PC-3 (cell line): ENCODE measurements at regions of chr2 and their contacts with region 1.

Region 1: GRCh38 chr2:203650860-203651613 is 55.4 kb upstream of the CD28 start:
- DNase-seq: peak; percentile 80
- ATAC-seq: peak; percentile 76
- H3K4me3 ChIP-seq: no peak overlapping the region
- H3K27ac ChIP-seq: no peak overlapping the region
- H3K4me1 ChIP-seq: peaks cover 32% of the 10 kb centered on the region
- H3K27me3 ChIP-seq: no peaks in the 10 kb centered on the region
- CTCF ChIP-seq: peak; percentile 78

Region 2: DNA sequence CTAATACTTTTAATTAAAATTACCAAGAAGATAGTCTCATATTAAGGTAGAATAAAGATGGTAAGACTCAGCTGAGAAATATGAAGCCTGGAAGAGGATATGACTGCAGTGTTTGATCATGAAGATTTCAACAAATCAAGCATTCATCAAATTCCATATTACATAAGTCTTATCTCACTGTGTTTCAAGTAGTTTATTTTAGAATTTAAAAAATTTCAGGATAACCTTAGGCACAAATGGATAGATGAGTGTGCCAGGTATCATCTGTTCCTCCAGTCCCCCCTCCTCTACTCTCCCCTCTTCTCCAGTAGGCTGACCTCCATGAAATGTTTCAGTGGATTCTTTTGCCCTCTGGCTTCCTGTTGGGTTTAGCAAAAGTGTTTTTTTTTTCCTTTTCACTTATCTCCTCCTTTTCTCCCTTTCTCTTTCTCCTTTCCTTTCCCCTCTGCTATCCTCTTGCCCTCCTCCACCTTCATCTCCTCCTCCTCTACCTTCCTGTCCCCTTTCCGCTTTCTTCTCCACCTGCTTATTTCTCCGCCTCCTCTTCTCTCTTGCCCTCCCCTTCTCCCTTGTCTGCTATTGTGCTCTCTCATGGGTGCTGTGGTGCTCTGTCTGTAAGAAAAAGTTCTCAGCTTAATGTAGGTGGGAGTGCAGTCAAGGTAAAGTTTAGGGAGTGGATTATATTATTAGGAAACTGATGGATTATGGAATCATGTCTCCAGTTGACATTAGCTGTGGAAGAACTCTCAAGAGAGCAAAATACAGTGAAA is 250.0 kb before region 1 on chr2:
- CTCF ChIA-PET with region 1: no interaction called
- POLR2A ChIA-PET with region 1: no interaction called
- intact Hi-C with region 1: no loop called
- DNase-seq: peak; percentile 70
- ATAC-seq: peak; percentile 43
- H3K4me3 ChIP-seq: no peak overlapping the region; the same call in 1 of the 2 replicates
- H3K27ac ChIP-seq: peak overlapping the region; percentile 95
- H3K4me1 ChIP-seq: peaks cover 55% of the 10 kb centered on the region
- H3K27me3 ChIP-seq: no peaks in the 10 kb centered on the region
- CTCF ChIP-seq: no peak

Region 3: GRCh38 chr2:203484266-203485112 is 166.5 kb before region 1 on chr2:
- CTCF ChIA-PET with region 1: no interaction called
- POLR2A ChIA-PET with region 1: no interaction called
- intact Hi-C with region 1: loop called (anchors 1 kb)
- DNase-seq: peak; percentile 72
- ATAC-seq: peak; percentile 98
- H3K4me3 ChIP-seq: no peak overlapping the region
- H3K27ac ChIP-seq: no peak overlapping the region
- H3K4me1 ChIP-seq: no peaks in the 10 kb centered on the region; the same call in 1 of the 2 replicates
- H3K27me3 ChIP-seq: no peaks in the 10 kb centered on the region
- CTCF ChIP-seq: peak; percentile 90

Region 4: GRCh38 chr2:203492965-203493364 is 158.1 kb before region 1 on chr2:
- CTCF ChIA-PET with region 1: no interaction called
- POLR2A ChIA-PET with region 1: no interaction called
- intact Hi-C with region 1: loop called (anchors 2 kb)
- DNase-seq: peak; percentile 30
- ATAC-seq: peak; percentile 54
- H3K4me3 ChIP-seq: peak overlapping the region; percentile 31; the same call in 1 of the 2 replicates
- H3K27ac ChIP-seq: peak overlapping the region; percentile 49
- H3K4me1 ChIP-seq: peaks cover 22% of the 10 kb centered on the region
- H3K27me3 ChIP-seq: no peaks in the 10 kb centered on the region
- CTCF ChIP-seq: no peak

Region 5: DNA sequence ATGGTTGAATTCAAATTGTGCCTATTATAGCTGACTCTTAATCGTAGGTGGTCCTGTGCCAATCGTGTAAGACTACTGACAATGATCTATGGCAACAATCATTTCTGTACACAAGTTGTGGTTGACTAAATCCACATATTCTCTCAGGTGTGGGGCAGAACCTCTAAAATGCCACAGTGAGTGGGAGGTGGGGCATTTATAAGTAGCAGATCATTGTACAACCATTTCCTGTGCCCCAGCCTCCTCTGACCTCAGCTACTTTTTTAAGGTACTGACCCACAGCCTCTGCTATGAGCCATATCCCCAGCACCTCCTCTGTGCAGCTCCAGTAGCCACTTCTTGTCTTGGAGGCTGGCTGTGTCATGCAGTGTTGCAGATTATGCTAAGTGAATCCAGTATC is 67.3 kb before region 1 on chr2:
- CTCF ChIA-PET with region 1: no interaction called
- POLR2A ChIA-PET with region 1: no interaction called
- intact Hi-C with region 1: loop called (anchors 2 kb)
- DNase-seq: peak; percentile 88
- ATAC-seq: peak; percentile 74
- H3K4me3 ChIP-seq: no peak overlapping the region
- H3K27ac ChIP-seq: peak overlapping the region; percentile 52
- H3K4me1 ChIP-seq: peaks cover 73% of the 10 kb centered on the region
- H3K27me3 ChIP-seq: no peaks in the 10 kb centered on the region
- CTCF ChIP-seq: no peak

Region 6: DNA sequence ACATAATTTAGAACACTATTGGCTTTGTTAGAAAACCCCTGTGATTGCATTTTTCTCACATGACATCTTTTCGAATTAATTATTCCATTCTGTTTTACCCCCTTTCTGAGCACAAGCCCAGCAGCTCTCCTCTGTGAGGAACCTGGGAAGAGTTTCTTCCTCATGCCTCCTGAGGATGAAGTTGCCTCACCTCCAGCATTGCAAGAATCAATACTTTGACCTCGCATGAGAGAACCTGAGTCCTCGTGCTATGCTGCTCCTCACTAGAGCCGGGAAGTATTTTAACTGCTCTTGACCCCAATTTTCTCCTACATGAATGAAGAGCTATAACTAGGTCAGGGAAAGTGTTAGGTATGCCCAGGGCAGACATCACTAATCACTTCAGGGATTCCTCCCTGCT is 38.8 kb before region 1 on chr2:
- CTCF ChIA-PET with region 1: no interaction called
- POLR2A ChIA-PET with region 1: no interaction called
- intact Hi-C with region 1: no loop called
- DNase-seq: no peak
- ATAC-seq: no peak
- H3K4me3 ChIP-seq: no peak overlapping the region
- H3K27ac ChIP-seq: no peak overlapping the region
- H3K4me1 ChIP-seq: no peaks in the 10 kb centered on the region
- H3K27me3 ChIP-seq: no peaks in the 10 kb centered on the region
- CTCF ChIP-seq: no peak